Activated CD4-positive, alpha-beta memory T cell treated with anti-CD3 and anti-CD28 coated beads for 36 hours (primary cell): ENCODE measurements at regions of chr1 and their contacts with region 1.

Region 1: DNA sequence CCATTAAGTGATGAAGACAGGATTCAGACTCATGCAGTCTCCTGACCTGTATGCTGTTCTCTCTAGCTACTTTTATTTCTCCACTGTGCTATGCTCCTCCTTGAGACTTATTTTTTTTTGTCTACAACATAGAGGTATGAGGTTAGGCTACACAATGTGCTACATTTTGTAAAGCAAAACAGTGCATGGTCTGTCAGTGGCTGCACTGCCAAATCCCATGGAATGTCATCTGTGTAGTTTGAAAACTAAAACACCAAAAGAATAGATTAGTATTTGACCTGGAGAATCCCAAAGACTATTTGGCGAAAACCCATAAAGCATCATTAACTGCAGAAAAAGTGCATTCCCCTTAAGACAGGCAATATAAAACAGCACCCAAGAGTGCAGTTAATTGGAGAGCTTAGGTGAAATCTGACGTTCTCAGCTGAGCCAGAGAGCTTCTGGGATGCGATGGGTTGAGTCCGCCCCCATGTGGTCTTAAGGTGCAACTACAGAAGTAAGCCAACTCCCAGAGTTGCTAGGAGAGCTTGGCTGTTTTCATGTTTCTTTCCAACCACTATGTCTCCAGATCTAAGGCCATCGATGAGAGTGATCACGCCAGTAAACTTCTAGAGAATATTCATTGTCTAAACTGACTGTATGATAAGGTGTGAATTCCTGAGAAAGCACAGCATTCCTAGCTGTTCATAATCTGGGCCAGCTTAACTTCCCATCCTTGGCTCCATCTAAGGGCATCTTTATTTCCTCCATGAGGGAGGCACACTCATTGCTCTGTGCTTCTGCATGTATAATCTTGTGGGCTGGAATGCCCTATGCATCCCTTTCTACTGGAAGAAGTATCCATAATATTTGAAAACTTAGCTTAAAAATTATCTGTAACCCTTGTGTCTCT is 20.7 kb upstream of the CYP2J2 start:
- DNase-seq: peak; percentile 61
- H3K4me3 Mint-ChIP-seq: no peak overlapping the region
- H3K27ac Mint-ChIP-seq: no peak overlapping the region
- H3K4me1 Mint-ChIP-seq: no peaks in the 10 kb centered on the region
- H3K27me3 Mint-ChIP-seq: no peaks in the 10 kb centered on the region

Region 2: DNA sequence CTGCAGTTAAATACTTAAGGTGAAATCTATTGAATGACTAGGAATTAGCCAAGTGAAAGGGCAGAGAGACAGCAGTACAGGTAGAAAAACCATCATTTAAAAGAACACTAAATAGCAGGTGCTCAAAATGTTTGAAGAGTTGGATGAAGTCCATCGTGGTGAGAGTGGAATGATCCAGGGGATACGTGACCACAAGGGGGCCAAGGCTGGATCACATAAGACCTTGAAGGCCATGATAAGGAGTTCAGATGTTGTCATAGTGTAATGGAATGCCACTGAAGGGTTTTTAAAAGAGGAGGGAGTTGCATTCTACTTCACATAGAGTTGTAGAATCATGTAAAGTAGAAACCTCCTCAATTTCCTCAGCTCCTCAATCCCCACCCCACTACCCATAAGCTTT is 167.3 kb before region 1 on chr1:
- CTCF ChIA-PET with region 1: interaction called, 10 read pairs
- POLR2A ChIA-PET with region 1: no interaction called
- intact Hi-C with region 1: no loop called
- DNase-seq: no peak
- H3K4me3 Mint-ChIP-seq: no peak overlapping the region
- H3K27ac Mint-ChIP-seq: no peak overlapping the region
- H3K4me1 Mint-ChIP-seq: no peaks in the 10 kb centered on the region
- H3K27me3 Mint-ChIP-seq: peaks cover 7% of the 10 kb centered on the region

Region 3: DNA sequence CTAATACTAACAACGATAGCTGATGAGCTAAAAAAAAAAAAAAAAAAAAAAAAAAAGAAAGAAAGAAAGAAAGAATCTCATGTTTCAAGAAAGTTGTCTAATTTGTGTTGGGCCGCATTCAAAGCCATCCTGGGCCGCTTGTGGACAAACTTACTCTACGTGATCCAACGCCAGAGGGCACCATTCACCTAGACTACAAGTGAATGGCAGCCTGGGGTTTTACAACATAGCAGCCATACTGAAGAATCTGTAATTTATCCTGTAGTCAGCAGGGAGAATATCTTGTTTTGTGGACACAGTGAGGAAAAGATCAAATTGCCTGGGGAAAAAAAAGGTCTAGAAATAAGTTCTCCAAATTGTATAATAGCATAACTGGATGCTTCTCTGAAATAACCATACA is 67.7 kb before region 1 on chr1:
- CTCF ChIA-PET with region 1: interaction called, 69 read pairs
- POLR2A ChIA-PET with region 1: no interaction called
- intact Hi-C with region 1: loop called (anchors 1 kb)
- DNase-seq: peak; percentile 49
- H3K4me3 Mint-ChIP-seq: no peak overlapping the region
- H3K27ac Mint-ChIP-seq: no peak overlapping the region
- H3K4me1 Mint-ChIP-seq: no peaks in the 10 kb centered on the region
- H3K27me3 Mint-ChIP-seq: no peaks in the 10 kb centered on the region

Region 4: GRCh38 chr1:59903141-59903754 is 44.0 kb before region 1 on chr1:
- CTCF ChIA-PET with region 1: interaction called, 26 read pairs
- POLR2A ChIA-PET with region 1: no interaction called
- intact Hi-C with region 1: loop called (anchors 1 kb)
- DNase-seq: peak; percentile 23
- H3K4me3 Mint-ChIP-seq: no peak overlapping the region
- H3K27ac Mint-ChIP-seq: no peak overlapping the region
- H3K4me1 Mint-ChIP-seq: no peaks in the 10 kb centered on the region
- H3K27me3 Mint-ChIP-seq: peaks cover 5% of the 10 kb centered on the region

Region 5: GRCh38 chr1:59926381-59927123 is 20.7 kb before region 1 on chr1 and contains the start of gene CYP2J2:
- CTCF ChIA-PET with region 1: interaction called, 13 read pairs
- POLR2A ChIA-PET with region 1: no interaction called
- intact Hi-C with region 1: no loop called
- DNase-seq: peak; percentile 58
- H3K4me3 Mint-ChIP-seq: peak within 1 kb of the TSS; percentile 76
- H3K27ac Mint-ChIP-seq: no peak within 1 kb of the TSS
- H3K4me1 Mint-ChIP-seq: peaks cover 10% of the 10 kb centered on the region
- H3K27me3 Mint-ChIP-seq: peaks cover 31% of the 10 kb centered on the region
- total RNA-seq, gene CYP2J2: 0.57 to 0.68 TPM

Region 6: GRCh38 chr1:60132985-60133675 is 185.8 kb after region 1 on chr1:
- CTCF ChIA-PET with region 1: no interaction called
- POLR2A ChIA-PET with region 1: no interaction called
- intact Hi-C with region 1: no loop called
- DNase-seq: no peak
- H3K4me3 Mint-ChIP-seq: no peak overlapping the region
- H3K27ac Mint-ChIP-seq: no peak overlapping the region
- H3K4me1 Mint-ChIP-seq: peaks cover 3% of the 10 kb centered on the region
- H3K27me3 Mint-ChIP-seq: peaks cover 1% of the 10 kb centered on the region